Activated CD4-positive, alpha-beta memory T cell treated with anti-CD3 and anti-CD28 coated beads for 36 hours (primary cell): ENCODE measurements at regions of chr10 and their contacts with region 1.

Region 1: DNA sequence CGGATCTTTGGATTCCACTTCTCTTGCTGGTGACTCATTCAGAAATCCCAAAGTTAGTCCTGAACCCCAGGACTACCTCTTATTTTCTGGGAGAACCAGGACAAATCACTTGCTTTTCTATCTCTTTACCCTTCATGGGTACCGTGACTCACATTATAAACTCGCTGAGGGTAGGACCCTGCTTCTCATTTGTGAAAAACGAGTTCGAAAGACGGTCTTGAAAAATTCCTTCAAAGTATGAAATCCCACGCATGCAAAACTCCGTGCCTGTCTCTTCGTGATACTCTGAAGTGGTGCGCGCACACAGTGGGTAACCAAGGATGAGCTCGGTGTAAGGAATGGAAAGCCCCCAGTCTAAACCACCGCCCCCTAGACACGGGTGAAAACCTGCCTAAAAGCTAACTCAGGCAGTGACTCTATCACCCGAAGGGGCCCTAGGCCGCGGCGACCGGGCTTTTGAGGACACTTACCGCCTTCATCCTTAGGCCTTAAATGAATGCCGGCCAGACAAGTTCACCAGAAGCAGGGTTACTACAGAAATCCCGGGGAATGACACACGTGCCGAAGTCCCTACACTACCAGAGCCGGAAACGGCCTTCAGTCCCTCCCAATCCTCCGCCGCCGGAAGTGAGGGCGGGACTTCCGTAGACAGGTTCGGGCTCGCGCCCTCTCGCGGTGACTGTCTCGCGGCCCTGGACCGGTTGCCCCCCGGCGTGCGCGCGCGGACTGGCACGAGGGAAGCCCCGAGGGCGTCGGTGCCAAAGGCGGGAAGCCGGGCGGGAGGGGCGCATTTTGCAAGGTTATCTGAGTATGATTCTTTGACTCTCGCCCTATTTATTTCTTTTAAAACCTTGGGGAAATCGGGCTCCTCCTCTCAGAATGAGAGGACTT is at the start of gene NOC3L:
- DNase-seq: peak; percentile 96
- H3K4me3 Mint-ChIP-seq: peak within 1 kb of the TSS; percentile 88
- H3K27ac Mint-ChIP-seq: peak within 1 kb of the TSS; percentile 89
- H3K4me1 Mint-ChIP-seq: peaks cover 33% of the 10 kb centered on the region
- H3K27me3 Mint-ChIP-seq: peaks cover 6% of the 10 kb centered on the region
- total RNA-seq, gene NOC3L: 37.6 to 39.2 TPM

Region 2: GRCh38 chr10:93968540-93968945 is 394.1 kb before region 1 on chr10:
- CTCF ChIA-PET with region 1: no interaction called
- POLR2A ChIA-PET with region 1: no interaction called
- intact Hi-C with region 1: no loop called
- DNase-seq: no peak
- H3K4me3 Mint-ChIP-seq: no peak overlapping the region
- H3K27ac Mint-ChIP-seq: no peak overlapping the region
- H3K4me1 Mint-ChIP-seq: no peaks in the 10 kb centered on the region
- H3K27me3 Mint-ChIP-seq: no peaks in the 10 kb centered on the region

Region 3: GRCh38 chr10:94194256-94194655 is 168.3 kb before region 1 on chr10:
- CTCF ChIA-PET with region 1: no interaction called
- POLR2A ChIA-PET with region 1: no interaction called
- intact Hi-C with region 1: no loop called
- DNase-seq: no peak
- H3K4me3 Mint-ChIP-seq: no peak overlapping the region
- H3K27ac Mint-ChIP-seq: no peak overlapping the region
- H3K4me1 Mint-ChIP-seq: no peaks in the 10 kb centered on the region
- H3K27me3 Mint-ChIP-seq: peaks cover 7% of the 10 kb centered on the region

Region 4: GRCh38 chr10:94402015-94402842 is 39.6 kb after region 1 on chr10 and contains the start of gene TBC1D12:
- CTCF ChIA-PET with region 1: interaction called, 4 read pairs
- POLR2A ChIA-PET with region 1: no interaction called
- intact Hi-C with region 1: loop called (anchors 2 kb)
- DNase-seq: peak; percentile 42
- H3K4me3 Mint-ChIP-seq: peak within 1 kb of the TSS; percentile 72
- H3K27ac Mint-ChIP-seq: no peak within 1 kb of the TSS
- H3K4me1 Mint-ChIP-seq: peaks cover 5% of the 10 kb centered on the region
- H3K27me3 Mint-ChIP-seq: peaks cover 45% of the 10 kb centered on the region
- total RNA-seq, gene TBC1D12: 0.58 to 0.62 TPM

Region 5: DNA sequence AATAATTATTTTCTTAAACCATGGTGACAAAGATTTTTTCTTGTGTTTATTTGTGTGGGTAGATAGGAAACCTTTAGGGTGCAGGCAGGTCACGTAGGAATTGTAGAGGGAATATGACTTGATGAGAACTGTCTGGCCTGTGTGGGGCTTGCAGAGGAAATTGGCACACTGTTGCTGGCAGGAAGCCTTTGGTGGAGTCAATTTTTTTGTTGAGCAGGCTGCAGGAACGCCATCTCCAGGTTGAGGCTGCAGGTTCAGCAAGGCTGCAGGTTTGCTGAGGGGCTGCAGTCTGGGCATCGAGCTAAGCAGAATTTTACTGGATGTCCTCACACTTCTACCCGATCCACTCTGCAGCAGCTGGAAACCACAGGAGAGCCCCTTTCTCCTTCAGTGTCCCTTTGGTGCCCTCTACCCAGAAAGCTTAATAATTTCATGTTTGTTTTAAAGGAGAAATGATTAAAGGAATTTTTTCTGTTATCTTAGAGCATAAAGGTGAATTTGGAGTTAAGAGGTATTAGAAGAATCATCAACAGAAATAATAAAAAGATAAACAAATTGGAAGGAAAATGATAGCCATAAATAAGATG is 76.8 kb after region 1 on chr10:
- CTCF ChIA-PET with region 1: interaction called, 13 read pairs
- POLR2A ChIA-PET with region 1: no interaction called
- intact Hi-C with region 1: loop called (anchors 5 kb)
- DNase-seq: no peak
- H3K4me3 Mint-ChIP-seq: no peak overlapping the region
- H3K27ac Mint-ChIP-seq: no peak overlapping the region
- H3K4me1 Mint-ChIP-seq: no peaks in the 10 kb centered on the region
- H3K27me3 Mint-ChIP-seq: peaks cover 8% of the 10 kb centered on the region